Heart right ventricle (tissue), 16 donors: ENCODE measurements at regions of chr16 and their contacts with region 1.

Region 1: GRCh38 chr16:30458561-30459394 is 13.1 kb upstream of the SEPHS2 start:
- DNase-seq: peak in 1 of 2 donors; percentile 34
- ATAC-seq: peak in 7 of 8 donors; percentile 13 to 65 (median 46)
- H3K4me3 ChIP-seq: no peak overlapping the region
- H3K27ac ChIP-seq: peak overlapping the region in 1 of 10 donors; percentile 82
- H3K4me1 ChIP-seq: peaks cover 0 to 25% (median 0%) of the 10 kb centered on the region in 9 donors
- H3K27me3 ChIP-seq: no peaks in the 10 kb centered on the region
- CTCF ChIP-seq: no peak

Region 2: GRCh38 chr16:30519120-30520049 is 60.6 kb after region 1 on chr16:
- intact Hi-C with region 1: loop called in 1 of 10 experiments (anchors 5 kb)
- DNase-seq: no peak
- ATAC-seq: no peak
- H3K4me3 ChIP-seq: no peak overlapping the region
- H3K27ac ChIP-seq: no peak overlapping the region
- H3K4me1 ChIP-seq: peaks cover 0 to 13% (median 6%) of the 10 kb centered on the region in 9 donors
- H3K27me3 ChIP-seq: no peaks in the 10 kb centered on the region
- CTCF ChIP-seq: no peak

Region 3: GRCh38 chr16:30609926-30610839 is 151.4 kb after region 1 on chr16 and contains the start of gene ZNF689:
- intact Hi-C with region 1: loop called in 2 of 10 experiments (anchors 5 to 10 kb)
- DNase-seq: peak; percentile 91 to 96
- ATAC-seq: peak; percentile 96 to 99 (median 99)
- H3K4me3 ChIP-seq: peak within 1 kb of the TSS; percentile 51 to 98 (median 93)
- H3K27ac ChIP-seq: peak within 1 kb of the TSS; percentile 66 to 99 (median 98)
- H3K4me1 ChIP-seq: peaks cover 0 to 33% (median 15%) of the 10 kb centered on the region in 9 donors
- H3K27me3 ChIP-seq: no peaks in the 10 kb centered on the region
- CTCF ChIP-seq: no peak
- total RNA-seq, gene ZNF689: 4.0 to 7.4 (median 5.6) TPM